Dendritic cell treated with granulocyte-macrophage colony-stimulating factor and Interleukin-4, amounts not matched to agents 40 ng/mL and 50 ng/mL, for 4 days (primary cell): ENCODE measurements at regions of chrX and their contacts with region 1.

Region 1: GRCh38 chrX:53088136-53088974 is 5.6 kb upstream of the KANTR start:
- H3K4me3 Mint-ChIP-seq: peak overlapping the region; percentile 71
- H3K27ac Mint-ChIP-seq: peak overlapping the region; percentile 47
- H3K4me1 Mint-ChIP-seq: peaks cover 23% of the 10 kb centered on the region
- H3K27me3 Mint-ChIP-seq: peaks cover 15% of the 10 kb centered on the region

Region 2: GRCh38 chrX:53071604-53072417 is 16.5 kb before region 1 on chrX:
- intact Hi-C with region 1: loop called (anchors 2 kb)
- H3K4me3 Mint-ChIP-seq: peak overlapping the region; percentile 64
- H3K27ac Mint-ChIP-seq: peak overlapping the region; percentile 8
- H3K4me1 Mint-ChIP-seq: peaks cover 13% of the 10 kb centered on the region
- H3K27me3 Mint-ChIP-seq: peaks cover 4% of the 10 kb centered on the region